PC-9 (cell line): ENCODE measurements at regions of chr1 and their contacts with region 1.

Region 1: DNA sequence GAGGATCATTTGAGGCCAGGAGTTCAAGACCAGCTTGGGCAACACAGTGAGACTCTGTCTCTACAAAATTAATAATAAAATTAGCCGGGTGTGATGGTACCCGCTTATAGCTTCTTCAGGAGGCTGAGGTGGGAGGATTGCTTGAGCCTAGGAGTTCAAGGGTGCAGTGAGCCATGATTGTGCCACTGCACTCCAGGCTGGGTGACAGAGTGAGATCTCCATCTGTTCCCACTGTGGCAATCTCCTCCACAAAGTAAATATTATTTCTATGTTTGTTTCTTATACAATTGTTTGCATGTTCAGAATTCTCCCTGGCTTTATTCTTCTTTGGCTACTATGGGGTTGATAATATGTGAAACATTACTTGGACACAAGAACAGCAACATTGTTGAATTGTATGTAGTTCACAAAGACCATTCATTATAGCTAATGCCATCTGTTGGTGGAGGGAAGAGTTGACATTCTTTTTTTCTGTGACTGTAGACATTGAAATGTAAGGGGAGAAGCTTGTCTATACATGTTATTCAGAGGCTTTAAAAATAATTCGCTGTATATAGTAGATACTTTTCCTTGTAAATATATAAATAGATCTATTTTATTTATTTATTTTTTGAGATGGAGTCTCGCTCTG is 47.8 kb upstream of the SRSF10 start:
- DNase-seq: peak in 1 of 2 experiments; percentile 37
- H3K4me3 ChIP-seq: no peak overlapping the region
- H3K27ac ChIP-seq: no peak overlapping the region
- H3K4me1 ChIP-seq: peaks cover 7% of the 10 kb centered on the region
- H3K27me3 ChIP-seq: no peaks in the 10 kb centered on the region
- CTCF ChIP-seq: peak; percentile 62

Region 2: GRCh38 chr1:24047101-24047459 is 19.1 kb after region 1 on chr1:
- CTCF ChIA-PET with region 1: interaction called, 10 read pairs
- POLR2A ChIA-PET with region 1: no interaction called
- intact Hi-C with region 1: no loop called
- DNase-seq: peak; percentile 32 to 57
- H3K4me3 ChIP-seq: no peak overlapping the region
- H3K27ac ChIP-seq: peak overlapping the region; percentile 12
- H3K4me1 ChIP-seq: peaks cover 36% of the 10 kb centered on the region
- H3K27me3 ChIP-seq: no peaks in the 10 kb centered on the region
- CTCF ChIP-seq: no peak

Region 3: GRCh38 chr1:24101796-24102586 is 74.0 kb after region 1 on chr1:
- CTCF ChIA-PET with region 1: no interaction called
- POLR2A ChIA-PET with region 1: no interaction called
- intact Hi-C with region 1: no loop called
- DNase-seq: peak in 1 of 2 experiments; percentile 32
- H3K4me3 ChIP-seq: no peak overlapping the region
- H3K27ac ChIP-seq: no peak overlapping the region
- H3K4me1 ChIP-seq: no peaks in the 10 kb centered on the region
- H3K27me3 ChIP-seq: no peaks in the 10 kb centered on the region
- CTCF ChIP-seq: no peak

Region 4: DNA sequence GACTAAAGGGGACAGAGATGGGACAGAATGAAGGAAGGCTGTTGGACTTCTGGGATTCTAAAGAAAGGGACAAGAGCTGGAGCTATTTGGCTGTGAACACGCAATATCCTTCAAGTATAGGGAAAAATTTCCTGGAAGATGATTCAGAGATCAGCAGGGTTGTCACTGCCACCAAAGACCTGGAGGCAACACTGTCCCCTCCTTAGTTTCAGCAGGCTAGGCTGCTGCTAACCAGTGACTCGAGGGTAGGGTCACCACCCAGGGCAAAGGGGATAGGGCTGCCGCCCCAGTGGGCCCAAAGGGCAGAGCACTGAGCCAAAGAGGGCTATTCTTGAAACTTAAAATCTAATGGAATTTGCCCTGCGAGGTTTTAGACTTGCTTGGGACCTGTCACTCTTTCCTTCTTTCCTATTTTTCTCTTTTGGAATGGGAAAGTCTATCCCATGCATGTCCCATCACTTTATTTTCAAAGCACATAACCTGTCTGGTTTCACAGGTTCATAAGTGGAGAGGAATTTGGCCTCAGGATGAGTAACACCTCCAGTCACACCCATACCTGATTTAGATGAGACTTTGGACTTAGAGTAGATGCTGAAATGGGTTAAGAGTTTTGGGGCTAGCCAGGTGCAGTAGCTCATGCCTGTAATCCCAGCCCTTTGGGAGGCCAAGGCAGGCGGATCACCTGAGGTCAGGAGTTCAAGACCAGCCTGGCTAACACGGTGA is 147.2 kb after region 1 on chr1:
- CTCF ChIA-PET with region 1: no interaction called
- POLR2A ChIA-PET with region 1: no interaction called
- intact Hi-C with region 1: no loop called
- DNase-seq: peak in 1 of 2 experiments; percentile 43
- H3K4me3 ChIP-seq: no peak overlapping the region
- H3K27ac ChIP-seq: 0 out of 2 replicates have a peak overlapping the region, but pooled peaks have one; percentile 34
- H3K4me1 ChIP-seq: peaks cover 11% of the 10 kb centered on the region; the same call in 1 of the 2 replicates
- H3K27me3 ChIP-seq: no peaks in the 10 kb centered on the region
- CTCF ChIP-seq: no peak

Region 5: GRCh38 chr1:24679725-24680124 is 651.8 kb after region 1 on chr1:
- CTCF ChIA-PET with region 1: no interaction called
- POLR2A ChIA-PET with region 1: no interaction called
- intact Hi-C with region 1: no loop called
- DNase-seq: no peak
- H3K4me3 ChIP-seq: no peak overlapping the region
- H3K27ac ChIP-seq: no peak overlapping the region
- H3K4me1 ChIP-seq: peaks cover 35% of the 10 kb centered on the region
- H3K27me3 ChIP-seq: no peaks in the 10 kb centered on the region
- CTCF ChIP-seq: no peak